ENCODE measurements at regions of chr1 and their contacts with region 1.

Region 1: DNA sequence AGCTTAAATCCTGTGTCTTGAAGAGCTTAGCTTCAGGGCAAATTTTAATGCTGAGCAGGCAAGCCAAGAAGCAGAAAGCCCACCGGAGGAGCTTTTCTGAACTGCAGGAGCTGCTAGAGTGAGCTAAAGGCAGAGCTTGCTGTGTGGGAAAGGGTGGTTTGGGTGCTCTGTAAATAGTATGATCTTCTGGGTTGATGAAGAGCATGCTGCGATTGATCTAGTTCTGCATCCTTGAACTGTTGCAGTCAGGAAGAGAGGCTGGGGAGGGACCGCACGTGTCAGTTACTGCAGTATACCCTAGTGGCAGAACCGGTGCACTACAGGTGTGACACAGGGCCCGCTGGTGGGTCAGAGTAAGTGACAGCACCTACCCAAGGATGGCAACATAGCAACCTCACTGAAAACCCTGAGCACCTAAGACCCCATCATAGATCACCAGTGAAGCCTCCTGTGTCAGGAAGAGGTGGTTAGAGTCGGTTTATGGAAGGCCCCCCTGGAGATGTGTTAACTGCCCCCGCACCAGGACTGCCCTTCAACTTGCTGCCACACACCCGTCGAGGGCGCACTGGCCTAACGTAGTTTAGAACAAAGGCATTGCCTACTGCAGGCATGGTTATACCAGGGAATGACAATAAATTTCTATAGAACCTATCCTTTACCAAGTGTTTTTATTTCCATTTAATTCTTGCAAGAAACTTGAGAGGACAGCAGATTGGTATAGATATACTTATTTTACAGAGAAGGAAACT is 146.0 kb upstream of the KIAA0040 start:
- DNase-seq: peak; percentile 29 to 92
- H3K4me3 ChIP-seq: no peak overlapping the region
- H3K27ac ChIP-seq: no peak overlapping the region
- H3K4me1 ChIP-seq: no peaks in the 10 kb centered on the region; a peak in 1 of 7 replicates
- H3K27me3 ChIP-seq: no peaks in the 10 kb centered on the region
- CTCF ChIP-seq: peak; percentile 68 to 91 (median 89)
- EP300 ChIP-seq: no peak
- POLR2A ChIP-seq: no peak
- RAD21 ChIP-seq: peak; percentile 55 to 58; a peak in 3 of 4 replicates

Region 2: GRCh38 chr1:175179845-175180590 is 158.5 kb before region 1 on chr1:
- CTCF ChIA-PET with region 1: interaction called, 11 read pairs
- POLR2A ChIA-PET with region 1: no interaction called
- DNase-seq: no peak
- H3K4me3 ChIP-seq: no peak overlapping the region
- H3K27ac ChIP-seq: no peak overlapping the region
- H3K4me1 ChIP-seq: peaks cover 0 to 7% (median 3%) of the 10 kb centered on the region in 4 experiments; a peak in 3 of 7 replicates
- H3K27me3 ChIP-seq: no peaks in the 10 kb centered on the region
- CTCF ChIP-seq: no peak
- EP300 ChIP-seq: no peak
- POLR2A ChIP-seq: no peak
- RAD21 ChIP-seq: no peak

Region 3: GRCh38 chr1:175353066-175353465 is 14.5 kb after region 1 on chr1:
- CTCF ChIA-PET with region 1: interaction called, 49 read pairs
- POLR2A ChIA-PET with region 1: no interaction called
- DNase-seq: no peak
- H3K4me3 ChIP-seq: no peak overlapping the region
- H3K27ac ChIP-seq: no peak overlapping the region
- H3K4me1 ChIP-seq: no peaks in the 10 kb centered on the region
- H3K27me3 ChIP-seq: no peaks in the 10 kb centered on the region
- CTCF ChIP-seq: no peak
- EP300 ChIP-seq: no peak
- POLR2A ChIP-seq: no peak
- RAD21 ChIP-seq: no peak

Region 4: DNA sequence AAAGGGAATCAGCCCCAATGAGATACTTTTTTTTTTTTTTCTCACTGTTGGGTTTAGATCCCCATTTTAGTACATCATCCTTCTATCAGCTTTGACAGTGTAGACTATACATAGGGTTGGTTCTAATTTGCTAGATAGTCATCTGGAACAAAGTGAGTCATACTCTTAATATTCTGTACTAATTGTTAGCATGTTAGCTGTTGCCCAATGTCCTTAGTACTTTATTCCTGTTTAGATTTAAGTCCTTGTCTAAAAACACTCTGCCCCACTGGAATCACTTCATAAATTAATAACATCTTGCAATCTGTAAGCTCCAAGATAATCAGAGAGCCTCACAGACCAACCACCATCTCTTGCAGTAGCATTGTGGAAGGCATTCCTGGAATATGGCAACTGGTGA is 63.8 kb after region 1 on chr1:
- CTCF ChIA-PET with region 1: no interaction called
- POLR2A ChIA-PET with region 1: no interaction called
- DNase-seq: no peak
- H3K4me3 ChIP-seq: no peak overlapping the region
- H3K27ac ChIP-seq: no peak overlapping the region
- H3K4me1 ChIP-seq: peaks cover 0 to 9% (median 0%) of the 10 kb centered on the region in 4 experiments; a peak in 2 of 7 replicates
- H3K27me3 ChIP-seq: no peaks in the 10 kb centered on the region
- CTCF ChIP-seq: no peak
- EP300 ChIP-seq: no peak
- POLR2A ChIP-seq: no peak
- RAD21 ChIP-seq: no peak